ENCODE measurements at regions of chrX and their contacts with region 1.

Region 1: DNA sequence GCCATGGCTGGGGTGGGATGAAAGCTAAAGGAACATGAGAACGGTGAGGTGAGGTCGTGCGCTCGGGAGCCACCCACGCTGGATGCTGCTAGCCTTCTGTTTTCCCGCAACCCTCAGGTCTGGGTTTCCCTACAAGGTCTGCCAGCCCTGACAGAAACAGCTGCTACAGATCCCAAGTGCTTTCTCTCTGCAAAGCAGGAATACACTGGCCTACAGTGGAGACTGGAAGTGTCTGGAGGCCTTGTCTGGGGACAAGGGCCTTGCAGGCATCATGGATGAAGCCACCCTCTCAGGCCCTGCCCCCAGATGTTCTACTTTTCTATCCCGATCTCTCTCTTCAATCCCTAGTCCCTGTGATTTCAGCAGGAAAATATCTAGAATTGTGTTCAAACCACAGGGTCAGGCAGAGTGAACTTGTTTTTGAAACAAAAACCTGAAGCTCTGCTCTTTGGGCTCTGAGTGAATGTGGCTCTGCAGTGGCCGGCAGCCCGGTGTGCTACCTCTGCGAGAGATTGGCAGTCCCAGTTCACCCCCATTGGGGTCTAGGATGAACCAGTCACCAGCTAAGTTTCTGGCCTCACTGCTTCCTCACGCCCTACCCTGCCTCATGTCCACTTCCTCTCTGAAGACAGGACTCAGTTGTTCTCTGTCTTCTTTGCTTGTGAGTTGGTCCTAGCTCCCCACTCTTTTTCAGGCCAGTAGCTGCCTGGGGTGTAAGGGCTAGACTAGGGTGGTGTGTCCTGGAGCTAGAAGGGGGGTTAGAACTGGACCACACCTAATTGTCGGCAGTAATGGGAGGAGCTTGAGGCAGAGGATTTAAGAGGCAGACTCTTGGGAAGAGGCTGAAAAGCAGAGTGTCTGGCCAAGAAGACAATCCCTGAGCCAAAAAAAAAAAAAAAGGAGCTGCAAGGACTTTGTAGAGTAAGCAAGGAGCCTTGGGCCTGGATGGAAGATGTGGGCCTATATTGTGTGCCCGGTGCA is 89.6 kb downstream of the RTL5 start:
- DNase-seq: no peak

Region 2: DNA sequence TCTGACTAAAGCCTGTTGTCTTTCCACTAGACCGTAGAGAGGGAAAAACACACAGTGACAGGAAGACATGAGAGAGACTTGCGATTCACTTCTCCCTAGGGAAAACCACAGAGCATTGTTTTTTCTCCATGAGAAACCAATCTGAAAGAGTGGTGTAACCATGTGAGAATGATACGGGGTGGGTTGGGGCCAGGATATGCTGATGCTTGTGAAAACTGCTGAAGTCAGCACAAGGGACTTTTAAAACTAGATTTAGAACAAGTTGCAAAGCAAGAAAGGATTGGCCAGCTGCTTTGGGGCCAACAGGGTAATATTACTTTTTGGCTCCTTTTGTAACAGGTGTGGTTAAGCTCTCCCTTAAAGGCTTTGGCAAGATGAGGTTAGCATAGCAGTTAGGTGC is 65.4 kb before region 1 on chrX:
- intact Hi-C with region 1: no loop called
- DNase-seq: no peak

Region 3: GRCh38 chrX:72115380-72115779 is 73.2 kb after region 1 on chrX:
- intact Hi-C with region 1: loop called in 1 of 2 experiments (anchors 2 kb)
- DNase-seq: no peak